Dendritic cell treated with granulocyte-macrophage colony-stimulating factor and Interleukin-4, amounts not matched to agents 40 ng/mL and 50 ng/mL, for 4 days (primary cell): ENCODE measurements at regions of chr14 and their contacts with region 1.

Region 1: GRCh38 chr14:89915114-89915878 is 39.2 kb downstream of the EFCAB11 start:
- H3K4me3 Mint-ChIP-seq: no peak overlapping the region
- H3K27ac Mint-ChIP-seq: no peak overlapping the region
- H3K4me1 Mint-ChIP-seq: peaks cover 17% of the 10 kb centered on the region
- H3K27me3 Mint-ChIP-seq: no peaks in the 10 kb centered on the region

Region 2: DNA sequence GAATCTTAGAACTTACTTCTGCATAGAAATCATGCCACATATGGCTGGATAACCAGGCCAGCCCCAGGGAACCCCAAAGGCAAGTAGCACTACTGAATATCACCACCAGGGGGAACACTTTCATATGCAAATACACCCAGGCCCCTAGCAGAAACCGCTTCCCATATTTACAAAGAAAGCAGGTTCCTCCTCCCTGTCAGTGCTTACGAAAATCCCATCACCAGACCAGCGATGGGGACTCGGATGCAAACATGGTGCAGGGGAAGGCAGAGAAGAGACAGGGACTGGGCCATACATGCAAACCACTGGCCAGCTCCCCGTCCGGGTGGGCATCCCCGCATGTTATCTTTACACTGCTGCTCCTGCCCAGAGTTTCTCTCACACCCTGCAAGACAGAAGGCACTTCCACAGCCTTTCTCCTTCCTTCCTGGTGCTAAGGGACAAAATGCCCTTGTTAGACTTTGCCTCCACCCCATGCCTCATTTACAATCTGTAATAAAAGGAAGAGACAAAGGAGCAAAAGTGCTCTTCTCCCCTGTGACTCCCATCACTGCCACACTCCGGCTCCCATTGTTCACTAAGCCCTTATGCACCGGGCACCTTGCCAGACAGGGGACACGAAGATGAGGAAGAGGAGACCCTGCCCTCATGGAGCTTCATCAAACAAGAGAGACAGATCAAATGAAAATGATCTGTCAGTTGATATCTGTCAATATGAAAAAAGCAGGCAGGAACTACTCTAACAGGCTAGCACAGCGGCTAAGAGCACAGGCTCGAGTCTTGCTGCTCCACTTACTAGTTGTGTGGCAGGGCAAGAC is 1422.8 kb before region 1 on chr14:
- intact Hi-C with region 1: loop called (anchors 5 kb)
- H3K4me3 Mint-ChIP-seq: peak overlapping the region; percentile 44
- H3K27ac Mint-ChIP-seq: no peak overlapping the region
- H3K4me1 Mint-ChIP-seq: peaks cover 6% of the 10 kb centered on the region
- H3K27me3 Mint-ChIP-seq: peaks cover 4% of the 10 kb centered on the region

Region 3: GRCh38 chr14:88667555-88668273 is 1247.6 kb before region 1 on chr14:
- intact Hi-C with region 1: loop called (anchors 2 kb)
- H3K4me3 Mint-ChIP-seq: no peak overlapping the region
- H3K27ac Mint-ChIP-seq: peak overlapping the region; percentile 63
- H3K4me1 Mint-ChIP-seq: peaks cover 20% of the 10 kb centered on the region
- H3K27me3 Mint-ChIP-seq: peaks cover 6% of the 10 kb centered on the region

Region 4: GRCh38 chr14:89027097-89027740 is 888.1 kb before region 1 on chr14:
- intact Hi-C with region 1: loop called (anchors 5 kb)
- H3K4me3 Mint-ChIP-seq: peak overlapping the region; percentile 67
- H3K27ac Mint-ChIP-seq: no peak overlapping the region
- H3K4me1 Mint-ChIP-seq: peaks cover 21% of the 10 kb centered on the region
- H3K27me3 Mint-ChIP-seq: peaks cover 45% of the 10 kb centered on the region

Region 5: GRCh38 chr14:89040460-89041259 is 874.6 kb before region 1 on chr14:
- intact Hi-C with region 1: loop called (anchors 5 kb)
- H3K4me3 Mint-ChIP-seq: peak overlapping the region; percentile 78
- H3K27ac Mint-ChIP-seq: peak overlapping the region; percentile 76
- H3K4me1 Mint-ChIP-seq: peaks cover 20% of the 10 kb centered on the region
- H3K27me3 Mint-ChIP-seq: peaks cover 32% of the 10 kb centered on the region

Region 6: DNA sequence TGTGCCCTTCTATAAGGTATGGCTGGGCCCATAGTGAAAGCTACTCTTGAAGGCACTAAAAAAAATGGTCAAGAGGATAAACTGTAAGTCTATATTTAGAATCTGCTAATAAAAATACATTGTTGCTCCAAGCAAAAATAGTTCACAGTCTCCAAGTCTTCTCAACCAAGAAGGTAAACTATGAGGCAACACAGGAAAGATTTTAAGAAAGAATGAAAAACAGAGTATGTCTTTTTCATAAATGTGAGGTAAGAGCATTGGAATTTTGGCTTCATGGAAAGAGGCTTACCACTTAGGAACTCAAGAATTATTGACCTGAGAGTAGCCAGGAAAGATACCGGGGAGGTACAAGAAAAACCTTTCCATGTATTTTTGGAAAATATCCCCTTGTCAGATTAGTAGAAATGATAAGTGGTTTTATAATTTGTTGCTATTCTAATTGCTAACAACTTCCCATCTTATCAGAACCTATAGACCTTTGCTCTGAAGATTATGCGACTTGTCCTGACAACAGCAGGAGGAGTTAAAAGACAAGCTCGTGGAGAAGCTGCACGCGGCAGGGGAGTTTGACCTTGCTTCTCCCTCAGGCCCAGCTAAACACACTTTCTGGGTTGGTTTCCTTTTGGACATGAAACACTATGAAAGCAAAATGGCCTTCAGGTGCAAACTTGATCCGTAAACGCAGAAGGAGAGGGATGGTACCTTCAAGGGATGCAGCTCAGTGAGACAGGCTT is 736.3 kb before region 1 on chr14:
- intact Hi-C with region 1: loop called (anchors 5 kb)
- H3K4me3 Mint-ChIP-seq: no peak overlapping the region
- H3K27ac Mint-ChIP-seq: no peak overlapping the region
- H3K4me1 Mint-ChIP-seq: peaks cover 15% of the 10 kb centered on the region
- H3K27me3 Mint-ChIP-seq: no peaks in the 10 kb centered on the region

Region 7: DNA sequence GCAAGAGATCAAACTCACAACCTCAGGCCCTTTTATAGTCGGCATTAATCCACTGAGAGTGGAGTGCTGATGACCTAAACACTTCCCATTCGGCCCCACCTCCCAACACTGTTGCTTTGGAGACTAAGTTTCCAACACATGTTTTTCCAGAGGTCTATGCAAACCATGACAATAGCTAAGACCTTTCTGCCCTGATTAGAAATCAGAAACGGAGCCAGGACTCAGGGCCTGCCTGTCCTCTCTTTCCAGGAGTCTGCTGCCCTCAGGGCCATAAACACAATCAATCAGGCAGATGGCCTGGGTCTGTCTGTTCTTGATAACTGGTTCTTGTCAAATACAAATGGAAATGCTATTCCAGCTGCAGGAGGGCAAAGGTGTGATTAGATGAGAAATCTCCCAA is 243.8 kb after region 1 on chr14:
- intact Hi-C with region 1: no loop called
- H3K4me3 Mint-ChIP-seq: no peak overlapping the region
- H3K27ac Mint-ChIP-seq: no peak overlapping the region
- H3K4me1 Mint-ChIP-seq: peaks cover 5% of the 10 kb centered on the region
- H3K27me3 Mint-ChIP-seq: peaks cover 8% of the 10 kb centered on the region